WTC11 (cell line): ENCODE measurements at regions of chr17 and their contacts with region 1.

Region 1: DNA sequence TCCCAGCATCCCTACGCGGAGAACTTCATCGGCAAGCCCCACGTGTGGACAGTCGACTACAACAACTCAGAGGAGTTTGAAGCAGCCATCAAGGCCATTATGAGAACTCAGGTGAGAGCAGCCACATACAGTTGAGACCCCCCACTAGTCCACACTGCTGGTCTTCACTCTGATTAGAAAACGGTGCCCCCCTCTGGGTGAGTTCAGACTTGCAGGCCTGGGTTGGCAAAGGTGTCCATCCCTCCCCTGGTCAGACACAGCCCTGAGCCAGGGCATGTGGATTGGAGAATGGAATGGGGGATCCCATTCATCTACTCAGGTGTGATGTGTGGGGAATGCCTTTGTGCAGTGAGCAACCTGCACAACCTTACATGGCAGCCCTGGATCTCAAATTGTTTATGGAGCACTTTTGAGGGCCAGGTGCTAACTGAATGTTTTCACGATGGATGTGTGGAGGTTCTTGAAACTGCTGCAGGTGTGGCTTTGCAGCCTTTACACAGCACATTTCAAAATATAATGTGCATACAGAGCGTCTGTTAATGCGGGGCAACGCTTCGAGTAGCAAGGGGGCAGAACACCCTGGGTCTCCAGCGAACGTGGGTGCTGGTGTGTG is 72.6 kb downstream of the MGAT5B start:
- DNase-seq: peak; percentile 85
- ATAC-seq: peak; percentile 78
- H3K4me3 Mint-ChIP-seq: 0 out of 2 replicates have a peak overlapping the region, but pooled peaks have one; percentile 7
- H3K27ac Mint-ChIP-seq: peak overlapping the region; percentile 67
- H3K4me1 Mint-ChIP-seq: peaks cover 28% of the 10 kb centered on the region
- H3K27me3 Mint-ChIP-seq: no peaks in the 10 kb centered on the region
- CTCF ChIP-seq: peak; percentile 34; the same call in 1 of the 2 replicates

Region 2: GRCh38 chr17:76820039-76820438 is 120.8 kb before region 1 on chr17:
- CTCF ChIA-PET with region 1: no interaction called
- POLR2A ChIA-PET with region 1: no interaction called
- DNase-seq: no peak
- ATAC-seq: no peak; the same call in 1 of the 2 replicates
- H3K4me3 Mint-ChIP-seq: no peak overlapping the region
- H3K27ac Mint-ChIP-seq: no peak overlapping the region
- H3K4me1 Mint-ChIP-seq: peaks cover 16% of the 10 kb centered on the region
- H3K27me3 Mint-ChIP-seq: no peaks in the 10 kb centered on the region
- CTCF ChIP-seq: no peak

Region 3: DNA sequence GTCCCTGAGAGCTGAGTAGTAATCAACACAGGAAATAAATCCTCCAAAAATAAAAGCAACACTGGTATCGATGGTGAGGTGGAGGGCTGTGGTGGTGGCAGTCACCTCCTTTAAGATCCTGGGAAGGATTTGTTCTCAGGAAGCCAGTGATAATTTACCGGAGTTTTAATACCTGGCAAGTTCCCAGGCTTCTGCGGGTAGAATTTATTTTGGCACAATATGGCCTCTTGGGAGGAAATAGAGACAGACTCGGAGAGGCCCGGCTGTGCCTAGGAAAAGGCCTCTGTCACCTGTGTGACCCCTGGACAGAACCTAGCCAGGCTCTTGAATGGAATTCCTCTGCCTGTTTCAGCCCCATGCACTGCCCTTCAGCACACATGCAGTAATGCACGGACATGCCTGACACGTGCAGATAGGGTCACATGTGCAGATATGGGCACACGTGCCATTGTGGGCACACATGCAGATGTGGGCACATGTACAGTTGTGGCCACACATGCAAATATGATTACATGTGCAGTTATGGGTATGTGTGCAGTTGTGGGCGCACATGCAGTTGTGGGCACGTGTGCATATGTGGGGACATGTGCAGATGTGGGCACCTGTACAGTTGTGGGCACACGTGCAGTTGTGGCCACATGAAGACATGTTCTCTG is 39.2 kb before region 1 on chr17:
- CTCF ChIA-PET with region 1: no interaction called
- POLR2A ChIA-PET with region 1: no interaction called
- DNase-seq: no peak
- ATAC-seq: no peak
- H3K4me3 Mint-ChIP-seq: no peak overlapping the region
- H3K27ac Mint-ChIP-seq: no peak overlapping the region
- H3K4me1 Mint-ChIP-seq: peaks cover 9% of the 10 kb centered on the region
- H3K27me3 Mint-ChIP-seq: no peaks in the 10 kb centered on the region; the same call in 1 of the 2 replicates
- CTCF ChIP-seq: no peak

Region 4: DNA sequence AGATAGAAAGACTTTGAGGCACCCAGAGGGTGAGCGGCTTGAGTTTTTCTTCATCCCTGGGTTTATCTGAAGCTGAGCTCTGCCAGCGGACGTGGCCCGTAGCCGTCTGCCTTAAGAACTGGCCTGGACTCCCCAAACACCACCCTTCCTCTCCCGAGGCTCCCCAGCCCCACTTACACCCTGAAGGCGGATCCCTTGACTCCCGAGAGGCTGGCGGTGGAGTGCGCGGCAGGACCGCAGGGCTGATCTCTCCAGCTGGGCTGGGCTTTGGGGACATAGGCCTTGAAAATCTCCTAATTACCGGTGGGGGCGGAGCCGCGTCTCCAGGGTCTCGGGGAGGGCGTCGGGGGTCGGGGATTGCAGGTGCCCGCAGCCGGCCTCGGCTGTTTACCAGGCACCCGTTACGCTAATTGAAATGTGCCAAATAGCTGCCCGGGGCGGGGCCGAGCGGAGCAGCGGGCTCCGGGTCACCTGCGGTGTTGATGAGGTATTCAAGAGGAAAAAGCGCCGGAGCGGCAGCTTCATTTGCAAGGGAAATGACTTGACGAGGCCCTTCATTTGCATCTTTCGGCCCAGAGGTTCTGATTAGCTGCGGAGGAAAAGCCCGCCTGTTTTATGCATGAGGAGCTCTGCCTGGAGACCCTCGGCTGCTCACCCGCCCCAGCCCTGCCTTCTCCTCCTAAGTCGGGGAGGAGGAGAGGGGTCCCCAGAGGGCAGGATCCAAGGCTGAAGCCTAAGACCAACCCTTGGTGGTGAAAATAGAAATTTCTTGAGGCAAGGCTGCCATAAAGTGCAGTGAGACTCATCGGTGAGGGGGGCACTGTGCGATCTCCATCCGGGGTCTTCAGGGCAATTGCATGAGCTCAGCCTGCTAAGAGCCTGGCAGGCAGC is 28.1 kb after region 1 on chr17:
- CTCF ChIA-PET with region 1: interaction called, 14 read pairs
- POLR2A ChIA-PET with region 1: interaction called, 4 read pairs
- DNase-seq: peak; percentile 96
- ATAC-seq: peak; percentile 85
- H3K4me3 Mint-ChIP-seq: peak overlapping the region; percentile 78
- H3K27ac Mint-ChIP-seq: peak overlapping the region; percentile 99
- H3K4me1 Mint-ChIP-seq: peaks cover 70% of the 10 kb centered on the region
- H3K27me3 Mint-ChIP-seq: no peaks in the 10 kb centered on the region; the same call in 1 of the 2 replicates
- CTCF ChIP-seq: no peak

Region 5: GRCh38 chr17:77002103-77003045 is 61.5 kb after region 1 on chr17:
- CTCF ChIA-PET with region 1: no interaction called
- POLR2A ChIA-PET with region 1: no interaction called
- DNase-seq: no peak
- ATAC-seq: peak; percentile 46
- H3K4me3 Mint-ChIP-seq: no peak overlapping the region
- H3K27ac Mint-ChIP-seq: no peak overlapping the region
- H3K4me1 Mint-ChIP-seq: peaks cover 24% of the 10 kb centered on the region
- H3K27me3 Mint-ChIP-seq: no peaks in the 10 kb centered on the region
- CTCF ChIP-seq: no peak